ENCODE measurements at regions of chr12 and their contacts with region 1.

Region 1: GRCh38 chr12:131229426-131230339 is 276.0 kb downstream of the ADGRD1 start:
- DNase-seq: peak; percentile 37 to 51
- ATAC-seq: peak; percentile 50 to 91 (median 83)
- H3K4me3 ChIP-seq: peak overlapping the region in 1 of 10 donors; percentile 27
- H3K27ac ChIP-seq: peak overlapping the region in 8 of 10 donors; percentile 25 to 85 (median 56)
- H3K4me1 ChIP-seq: peaks cover 0 to 26% (median 15%) of the 10 kb centered on the region in 9 donors
- H3K27me3 ChIP-seq: peaks cover 0 to 26% (median 11%) of the 10 kb centered on the region in 7 donors
- CTCF ChIP-seq: peak in 1 of 9 donors; percentile 6

Region 2: DNA sequence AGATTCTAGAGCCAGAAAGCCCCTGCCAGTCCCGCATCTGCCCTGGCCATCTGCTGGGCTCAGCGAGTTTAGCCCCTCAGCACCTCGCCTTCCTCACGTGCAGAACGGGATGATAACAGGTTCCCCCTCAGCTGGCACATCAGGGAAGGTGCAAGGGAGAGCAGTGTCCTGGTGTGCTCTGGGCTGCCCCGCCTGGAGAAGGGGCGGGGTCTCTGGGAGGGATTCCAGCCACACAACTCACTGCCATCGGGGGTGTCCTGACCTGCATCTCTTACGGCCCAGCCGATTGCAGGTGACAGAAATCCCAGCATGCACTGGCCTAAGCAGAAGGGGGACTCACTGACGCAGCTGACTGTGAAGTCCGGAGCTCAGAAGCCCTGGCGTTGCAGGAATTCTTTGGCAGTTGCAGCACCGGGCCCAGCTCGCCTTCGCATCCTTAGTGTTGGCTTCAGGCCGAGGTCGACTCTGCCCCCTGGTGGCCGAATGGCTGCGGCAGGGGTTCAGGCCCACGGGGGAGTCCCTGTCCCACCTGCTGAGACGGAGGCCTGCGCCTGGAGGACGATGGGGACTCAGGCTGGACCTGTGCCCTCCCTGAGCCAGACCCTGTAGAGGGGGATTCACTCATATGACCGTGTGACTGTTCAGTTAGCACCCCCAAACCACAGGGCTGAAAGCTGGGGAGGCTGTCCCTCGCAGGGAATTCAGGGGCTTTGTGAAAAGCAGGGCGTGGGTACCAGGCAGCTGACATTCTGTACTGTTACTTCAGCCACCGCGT is 97.4 kb before region 1 on chr12:
- intact Hi-C with region 1: no loop called
- DNase-seq: peak; percentile 69 to 76
- ATAC-seq: peak; percentile 46 to 90 (median 78)
- H3K4me3 ChIP-seq: no peak overlapping the region
- H3K27ac ChIP-seq: peak overlapping the region in 3 of 10 donors; percentile 14 to 19 (median 15)
- H3K4me1 ChIP-seq: peaks cover 7 to 18% (median 12%) of the 10 kb centered on the region in 9 donors
- H3K27me3 ChIP-seq: no peaks in the 10 kb centered on the region
- CTCF ChIP-seq: peak; percentile 61 to 90 (median 83)

Region 3: DNA sequence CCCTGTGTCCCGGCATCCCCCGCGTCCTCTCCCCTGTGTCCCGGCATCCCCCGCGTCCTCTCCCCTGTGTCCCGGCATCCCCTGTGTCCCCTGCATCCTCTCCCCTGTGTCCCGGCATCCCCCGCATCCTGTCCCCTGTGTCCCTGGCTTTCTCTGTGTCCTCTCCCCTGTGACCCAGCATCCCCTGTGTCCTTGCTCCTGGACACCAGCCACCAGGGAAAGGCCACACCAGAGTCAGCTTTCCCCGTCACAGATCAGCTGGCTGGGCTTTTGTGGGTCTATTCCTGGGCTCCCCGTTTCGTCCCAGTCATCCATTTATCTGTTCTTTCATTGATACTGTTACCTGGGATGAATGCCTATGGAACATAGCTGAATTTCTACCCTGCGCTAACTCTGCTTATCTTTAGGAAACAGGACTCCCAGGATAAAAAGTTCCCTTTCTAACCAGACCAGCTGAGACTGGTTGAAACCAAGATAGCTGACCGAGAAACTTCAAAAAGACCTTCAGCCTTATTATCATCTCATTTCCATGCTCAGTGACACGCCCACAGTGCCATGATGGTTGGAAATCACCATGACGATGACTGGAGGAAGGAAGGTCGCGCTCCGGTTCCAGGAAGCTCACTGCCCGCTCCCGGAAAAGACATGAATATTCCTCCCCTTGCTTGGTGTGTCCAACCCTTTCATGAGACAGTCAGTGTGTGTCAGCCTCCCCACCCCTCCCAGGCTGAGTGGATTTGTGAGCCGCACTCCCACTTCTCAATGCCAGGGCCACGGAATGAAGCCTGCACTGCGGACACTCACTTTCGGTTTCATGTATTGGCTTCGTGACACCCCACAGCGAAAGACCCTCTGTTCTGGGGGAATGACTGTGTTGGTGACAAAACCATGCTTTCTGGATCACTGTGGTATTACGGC is 204.8 kb after region 1 on chr12:
- intact Hi-C with region 1: loop called in 1 of 10 experiments (anchors 5 kb)
- DNase-seq: no peak
- ATAC-seq: peak in 4 of 8 donors; percentile 41 to 55 (median 43)
- H3K4me3 ChIP-seq: peak overlapping the region in 2 of 10 donors; percentile 6 to 16
- H3K27ac ChIP-seq: peak overlapping the region in 2 of 10 donors; percentile 7 to 9
- H3K4me1 ChIP-seq: no peaks in the 10 kb centered on the region
- H3K27me3 ChIP-seq: peaks cover 0 to 60% (median 39%) of the 10 kb centered on the region in 7 donors
- CTCF ChIP-seq: no peak